Calu3 (cell line): ENCODE measurements at regions of chr2 and their contacts with region 1.

Region 1: DNA sequence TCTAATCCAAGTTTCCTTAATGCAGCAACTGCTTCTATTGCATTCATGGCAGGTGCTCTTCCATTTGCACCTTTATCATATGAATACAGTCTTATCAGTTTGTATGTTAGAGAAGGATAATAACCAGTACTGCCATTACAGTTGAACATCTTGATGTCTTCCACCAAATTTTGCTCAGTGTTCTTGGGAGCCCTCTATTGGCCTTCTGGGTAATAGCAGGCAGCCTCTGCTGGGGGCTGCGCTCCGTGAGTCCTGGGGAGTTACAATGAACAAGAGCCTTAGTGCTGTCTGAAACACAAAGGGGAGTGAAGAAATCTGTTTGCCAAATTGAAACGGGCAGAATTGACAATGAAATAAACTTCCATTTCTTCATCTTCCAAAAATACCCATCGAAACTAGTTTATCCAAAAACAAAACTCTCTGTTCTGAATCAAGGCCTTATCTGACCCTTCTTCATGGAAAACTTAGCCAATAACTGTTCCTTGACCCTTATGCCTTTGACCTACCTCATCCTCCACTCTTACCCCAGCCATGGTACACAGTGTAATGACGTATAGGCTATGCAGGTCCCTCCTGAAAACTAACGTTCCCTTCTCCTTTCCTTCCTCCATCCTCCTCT is 79.9 kb downstream of the ALK start:
- DNase-seq: peak; percentile 45
- H3K4me3 Mint-ChIP-seq: no peak overlapping the region
- H3K27ac Mint-ChIP-seq: no peak overlapping the region
- H3K4me1 Mint-ChIP-seq: no peaks in the 10 kb centered on the region
- H3K27me3 Mint-ChIP-seq: peaks cover 96% of the 10 kb centered on the region
- CTCF ChIP-seq: peak; percentile 86

Region 2: DNA sequence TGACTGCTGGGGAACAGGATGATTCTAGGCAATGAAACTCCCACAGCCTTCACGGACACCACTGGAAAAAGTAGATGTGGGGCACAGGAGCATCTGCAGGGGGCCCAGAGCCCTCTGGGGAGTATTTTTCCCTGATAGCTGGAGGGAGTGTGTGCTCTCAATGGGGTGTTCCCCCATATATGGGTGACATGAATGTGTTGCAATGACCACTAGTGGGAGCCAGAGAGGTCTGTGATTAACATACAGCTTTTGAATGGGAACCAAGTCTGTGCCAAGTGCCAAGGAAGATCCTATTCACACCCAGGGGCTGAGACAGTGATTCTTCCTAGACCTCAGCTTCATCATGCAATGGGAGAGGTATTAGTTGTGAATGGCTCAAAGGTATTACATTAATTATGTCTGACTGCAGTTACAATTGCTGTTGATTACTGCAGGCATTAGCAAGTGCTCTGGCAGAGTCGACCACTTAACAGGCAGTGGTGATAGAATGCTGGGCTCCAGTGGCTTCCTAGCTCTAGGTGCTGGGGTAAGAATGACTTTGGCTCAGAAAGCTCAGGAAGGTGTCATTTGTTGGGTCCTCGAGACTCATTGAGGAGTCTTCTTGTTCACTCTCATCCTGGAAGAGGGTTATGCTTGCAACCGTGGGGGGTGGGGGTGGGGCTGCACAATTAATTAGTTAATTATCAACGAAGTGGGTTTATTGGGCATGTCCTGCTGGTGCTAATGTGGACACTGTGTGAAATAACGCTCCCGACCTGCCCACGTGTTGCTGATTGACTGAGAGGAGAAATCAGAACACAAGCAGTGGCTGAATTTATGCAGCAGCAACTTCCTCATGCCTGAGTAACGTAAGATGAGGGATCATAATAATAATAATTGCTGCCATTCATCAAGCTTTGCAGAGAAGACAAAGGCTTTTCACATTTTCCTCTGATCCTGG is 532.1 kb before region 1 on chr2:
- CTCF ChIA-PET with region 1: no interaction called
- intact Hi-C with region 1: loop called (anchors 1 kb)
- DNase-seq: peak; percentile 72
- H3K4me3 Mint-ChIP-seq: no peak overlapping the region
- H3K27ac Mint-ChIP-seq: no peak overlapping the region
- H3K4me1 Mint-ChIP-seq: no peaks in the 10 kb centered on the region
- H3K27me3 Mint-ChIP-seq: peaks cover 92% of the 10 kb centered on the region
- CTCF ChIP-seq: peak; percentile 69

Region 3: DNA sequence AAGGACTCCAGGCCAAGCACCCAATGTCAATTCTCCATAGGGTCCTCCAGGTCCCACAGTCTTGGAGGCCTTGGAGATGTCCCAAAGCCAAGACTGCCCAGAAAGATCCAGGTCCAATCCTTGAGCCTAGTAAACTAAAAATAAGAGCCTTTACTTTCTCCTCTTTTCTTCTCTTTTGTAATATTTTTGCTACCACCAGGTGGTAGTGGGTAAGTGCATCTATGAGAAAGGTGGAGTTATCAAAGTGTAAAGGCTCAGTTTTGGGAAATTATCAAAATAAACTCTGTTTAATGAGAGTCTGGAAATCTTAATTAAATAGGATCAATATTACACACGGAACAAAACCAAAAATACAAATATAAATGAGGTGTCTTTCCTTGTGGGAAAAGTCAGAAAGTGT is 196.5 kb before region 1 on chr2:
- CTCF ChIA-PET with region 1: no interaction called
- intact Hi-C with region 1: loop called (anchors 2 kb)
- DNase-seq: no peak
- H3K4me3 Mint-ChIP-seq: no peak overlapping the region
- H3K27ac Mint-ChIP-seq: no peak overlapping the region
- H3K4me1 Mint-ChIP-seq: no peaks in the 10 kb centered on the region
- H3K27me3 Mint-ChIP-seq: peaks cover 76% of the 10 kb centered on the region
- CTCF ChIP-seq: no peak